CD4-positive, alpha-beta T cell (primary cell): ENCODE measurements at regions of chr5 and their contacts with region 1.

Region 1: DNA sequence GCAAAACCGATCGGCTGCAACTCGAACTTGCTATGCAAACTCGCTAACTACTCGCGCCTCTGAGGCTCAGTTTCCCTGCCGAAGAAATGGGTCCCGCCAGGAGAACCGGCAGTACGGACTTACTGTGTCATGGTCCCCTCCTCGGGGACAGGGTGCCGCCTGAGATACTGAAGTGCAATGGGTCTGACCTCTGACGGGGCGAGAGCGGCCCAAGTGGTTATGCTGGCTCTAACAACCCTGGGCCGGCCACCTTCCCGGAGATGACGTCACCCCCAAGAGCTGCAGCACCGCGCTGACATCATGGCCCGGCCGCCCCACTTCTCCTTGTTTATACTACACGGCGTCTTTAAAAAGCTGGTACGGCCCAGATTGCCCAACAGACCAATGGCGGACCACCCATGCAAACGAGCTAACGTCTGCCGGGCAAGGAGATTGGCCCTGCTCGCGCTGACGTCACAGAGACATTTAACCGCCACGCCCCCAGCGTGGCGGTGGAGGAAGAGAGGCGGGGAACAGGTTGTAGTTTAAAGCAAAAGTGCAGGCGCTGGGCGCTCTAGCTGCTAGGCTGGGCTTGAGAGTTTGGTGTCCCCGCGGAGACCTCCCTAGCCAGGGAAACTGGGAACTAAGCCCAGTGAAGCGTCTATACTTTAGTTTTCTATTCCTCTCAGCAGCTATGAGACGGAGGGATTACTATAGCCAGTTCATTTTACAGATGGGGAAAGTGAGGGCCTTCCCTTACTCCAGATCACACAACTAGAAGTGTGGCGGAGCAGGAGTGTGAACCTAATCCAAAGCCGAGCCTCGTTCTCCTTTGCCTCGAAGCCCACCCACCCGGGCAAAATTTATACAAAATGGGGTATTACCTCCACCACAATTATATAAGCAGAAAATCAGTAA is 654 bp upstream of the RNF44 start:
- DNase-seq: peak; percentile 92 to 100 (median 96)
- ATAC-seq: peak; percentile 73
- H3K4me3 ChIP-seq: peak overlapping the region; percentile 98
- H3K4me3 Mint-ChIP-seq: peak overlapping the region; percentile 99
- H3K27ac ChIP-seq: peak overlapping the region; percentile 99
- H3K27ac Mint-ChIP-seq: peak overlapping the region; percentile 100
- H3K4me1 ChIP-seq: peaks cover 78% of the 10 kb centered on the region
- H3K4me1 Mint-ChIP-seq: peaks cover 82% of the 10 kb centered on the region
- H3K27me3 ChIP-seq: no peaks in the 10 kb centered on the region
- H3K27me3 Mint-ChIP-seq: no peaks in the 10 kb centered on the region
- CTCF ChIP-seq: no peak

Region 2: DNA sequence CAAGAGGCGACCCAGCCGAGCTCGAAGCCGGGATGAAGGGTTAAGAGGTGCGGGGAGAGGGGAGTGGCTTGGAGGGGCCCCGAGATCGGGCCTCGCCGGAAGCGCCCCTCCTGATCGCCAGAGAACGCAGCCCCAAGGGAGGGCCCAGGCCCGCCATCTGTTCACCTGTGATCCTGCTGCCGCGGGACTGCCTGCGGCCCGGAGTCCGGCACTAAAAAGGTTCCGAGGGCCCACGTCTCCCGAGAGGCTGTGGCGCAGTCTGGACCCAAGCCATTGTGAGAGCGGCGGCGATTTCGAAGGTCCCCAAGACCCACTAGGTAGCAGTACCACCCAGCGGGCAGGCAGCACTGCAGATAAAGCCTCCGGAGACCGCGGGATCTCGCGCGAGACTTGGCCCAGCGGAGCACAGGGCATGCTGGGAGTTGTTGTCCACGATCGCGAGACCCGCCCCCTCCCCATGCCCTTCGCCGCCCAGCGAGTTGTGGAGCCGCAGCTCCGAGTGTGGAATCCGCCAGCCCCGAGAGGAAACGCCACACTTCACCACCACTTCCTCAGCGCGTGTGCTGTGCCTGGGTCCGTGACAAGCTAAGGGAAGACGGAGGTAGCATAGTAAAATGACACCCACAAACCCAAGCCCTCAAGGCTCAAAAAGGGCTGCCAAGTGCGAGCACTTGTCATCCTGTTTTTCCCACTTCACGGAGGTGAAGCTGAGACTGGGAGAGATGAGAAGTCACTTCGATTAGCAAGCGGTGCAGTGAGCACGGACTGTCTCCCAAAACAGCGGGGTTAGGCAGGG is 176.2 kb before region 1 on chr5 and contains the start of gene KIAA1191:
- CTCF ChIA-PET with region 1: no interaction called
- POLR2A ChIA-PET with region 1: interaction called, 28 read pairs
- intact Hi-C with region 1: no loop called
- DNase-seq: peak; percentile 89 to 98 (median 94)
- ATAC-seq: peak; percentile 92
- H3K4me3 ChIP-seq: peak within 1 kb of the TSS; percentile 98
- H3K4me3 Mint-ChIP-seq: peak within 1 kb of the TSS; percentile 96
- H3K27ac ChIP-seq: peak within 1 kb of the TSS; percentile 69 to 79
- H3K27ac Mint-ChIP-seq: peak within 1 kb of the TSS; percentile 87
- H3K4me1 ChIP-seq: peaks cover 41% of the 10 kb centered on the region
- H3K4me1 Mint-ChIP-seq: peaks cover 48% of the 10 kb centered on the region
- H3K27me3 ChIP-seq: no peaks in the 10 kb centered on the region
- H3K27me3 Mint-ChIP-seq: no peaks in the 10 kb centered on the region
- CTCF ChIP-seq: no peak
- total RNA-seq, gene KIAA1191: 64.8 TPM

Region 3: GRCh38 chr5:176415952-176416924 is 121.6 kb before region 1 on chr5 and contains the start of gene CLTB:
- CTCF ChIA-PET with region 1: interaction called, 37 read pairs
- POLR2A ChIA-PET with region 1: interaction called, 40 read pairs
- intact Hi-C with region 1: loop called (anchors 2 to 5 kb)
- DNase-seq: peak; percentile 79 to 98 (median 92)
- ATAC-seq: peak; percentile 90
- H3K4me3 ChIP-seq: peak within 1 kb of the TSS; percentile 65
- H3K4me3 Mint-ChIP-seq: peak within 1 kb of the TSS; percentile 89
- H3K27ac ChIP-seq: peak within 1 kb of the TSS; percentile 18 to 61
- H3K27ac Mint-ChIP-seq: peak within 1 kb of the TSS; percentile 86
- H3K4me1 ChIP-seq: peaks cover 37% of the 10 kb centered on the region
- H3K4me1 Mint-ChIP-seq: peaks cover 42% of the 10 kb centered on the region
- H3K27me3 ChIP-seq: no peaks in the 10 kb centered on the region
- H3K27me3 Mint-ChIP-seq: no peaks in the 10 kb centered on the region
- CTCF ChIP-seq: peak; percentile 41
- total RNA-seq, gene CLTB: 69.5 to 73.2 TPM

Region 4: GRCh38 chr5:176490301-176490700 is 47.6 kb before region 1 on chr5:
- CTCF ChIA-PET with region 1: no interaction called
- POLR2A ChIA-PET with region 1: interaction called, 15 read pairs
- intact Hi-C with region 1: no loop called
- DNase-seq: no peak
- ATAC-seq: no peak
- H3K4me3 ChIP-seq: no peak overlapping the region
- H3K4me3 Mint-ChIP-seq: no peak overlapping the region
- H3K27ac ChIP-seq: no peak overlapping the region
- H3K27ac Mint-ChIP-seq: no peak overlapping the region
- H3K4me1 ChIP-seq: peaks cover 25% of the 10 kb centered on the region
- H3K4me1 Mint-ChIP-seq: peaks cover 46% of the 10 kb centered on the region
- H3K27me3 ChIP-seq: no peaks in the 10 kb centered on the region
- H3K27me3 Mint-ChIP-seq: no peaks in the 10 kb centered on the region
- CTCF ChIP-seq: no peak

Region 5: GRCh38 chr5:176553262-176554077 is 15.6 kb after region 1 on chr5:
- CTCF ChIA-PET with region 1: interaction called, 3 read pairs
- POLR2A ChIA-PET with region 1: interaction called, 29 read pairs
- intact Hi-C with region 1: no loop called
- DNase-seq: peak in 1 of 14 experiments; percentile 13
- ATAC-seq: no peak
- H3K4me3 ChIP-seq: no peak overlapping the region
- H3K4me3 Mint-ChIP-seq: no peak overlapping the region
- H3K27ac ChIP-seq: no peak overlapping the region
- H3K27ac Mint-ChIP-seq: peak overlapping the region; percentile 37
- H3K4me1 ChIP-seq: peaks cover 65% of the 10 kb centered on the region
- H3K4me1 Mint-ChIP-seq: peaks cover 46% of the 10 kb centered on the region
- H3K27me3 ChIP-seq: no peaks in the 10 kb centered on the region
- H3K27me3 Mint-ChIP-seq: no peaks in the 10 kb centered on the region
- CTCF ChIP-seq: no peak

Region 6: DNA sequence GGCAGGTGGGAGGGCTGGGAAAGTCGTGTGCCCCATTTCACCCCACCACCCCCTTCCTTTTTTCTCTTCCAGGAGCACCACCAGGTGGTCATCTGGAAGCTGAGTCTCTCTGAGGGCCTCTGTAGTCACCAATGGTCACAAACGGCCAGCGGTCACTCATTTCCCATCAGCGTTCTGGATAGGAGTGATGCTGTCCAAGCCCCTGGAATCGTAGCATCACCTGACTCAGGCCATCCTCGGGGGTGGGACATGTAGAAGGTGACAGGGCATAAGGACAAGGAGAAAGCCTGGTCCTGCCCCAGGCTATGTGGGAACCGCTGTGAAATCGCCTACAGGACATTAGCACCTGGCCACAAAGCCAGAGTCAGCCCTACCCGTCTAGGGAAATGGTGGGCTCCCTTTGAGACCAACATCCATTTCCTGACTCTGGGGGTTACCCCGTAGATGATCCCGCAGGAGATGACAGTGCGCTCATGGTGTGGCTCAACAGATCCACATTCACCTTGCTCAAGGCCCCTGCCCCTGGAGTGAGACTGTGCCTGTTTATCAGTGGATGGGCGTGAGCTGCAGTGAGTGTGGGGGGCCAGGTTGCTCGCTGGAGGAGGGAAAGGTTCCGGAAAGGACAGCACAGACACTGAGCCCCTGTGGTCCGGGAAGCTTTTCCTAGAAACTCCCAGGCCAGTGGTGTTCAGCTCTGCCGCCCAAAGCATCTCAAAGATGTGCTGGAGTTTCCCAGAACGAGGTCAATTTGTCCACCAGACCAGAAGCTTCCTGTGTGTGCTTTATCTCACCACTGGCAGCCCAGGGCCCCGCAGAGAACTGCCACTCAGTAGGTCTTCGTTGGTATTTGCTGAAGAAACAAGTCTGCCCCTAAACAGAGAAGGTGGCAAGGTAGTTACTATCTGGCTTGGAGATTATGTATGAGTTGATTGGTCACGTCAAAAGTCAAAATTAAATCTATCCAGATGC is 211.4 kb after region 1 on chr5:
- CTCF ChIA-PET with region 1: no interaction called
- POLR2A ChIA-PET with region 1: no interaction called
- intact Hi-C with region 1: no loop called
- DNase-seq: peak in 1 of 14 experiments; percentile 2
- ATAC-seq: no peak
- H3K4me3 ChIP-seq: no peak overlapping the region
- H3K4me3 Mint-ChIP-seq: no peak overlapping the region
- H3K27ac ChIP-seq: no peak overlapping the region
- H3K27ac Mint-ChIP-seq: no peak overlapping the region
- H3K4me1 ChIP-seq: peaks cover 19% of the 10 kb centered on the region
- H3K4me1 Mint-ChIP-seq: peaks cover 21% of the 10 kb centered on the region
- H3K27me3 ChIP-seq: peaks cover 56 to 60% of the 10 kb centered on the region in 2 experiments
- H3K27me3 Mint-ChIP-seq: peaks cover 77% of the 10 kb centered on the region
- CTCF ChIP-seq: no peak

Region 7: DNA sequence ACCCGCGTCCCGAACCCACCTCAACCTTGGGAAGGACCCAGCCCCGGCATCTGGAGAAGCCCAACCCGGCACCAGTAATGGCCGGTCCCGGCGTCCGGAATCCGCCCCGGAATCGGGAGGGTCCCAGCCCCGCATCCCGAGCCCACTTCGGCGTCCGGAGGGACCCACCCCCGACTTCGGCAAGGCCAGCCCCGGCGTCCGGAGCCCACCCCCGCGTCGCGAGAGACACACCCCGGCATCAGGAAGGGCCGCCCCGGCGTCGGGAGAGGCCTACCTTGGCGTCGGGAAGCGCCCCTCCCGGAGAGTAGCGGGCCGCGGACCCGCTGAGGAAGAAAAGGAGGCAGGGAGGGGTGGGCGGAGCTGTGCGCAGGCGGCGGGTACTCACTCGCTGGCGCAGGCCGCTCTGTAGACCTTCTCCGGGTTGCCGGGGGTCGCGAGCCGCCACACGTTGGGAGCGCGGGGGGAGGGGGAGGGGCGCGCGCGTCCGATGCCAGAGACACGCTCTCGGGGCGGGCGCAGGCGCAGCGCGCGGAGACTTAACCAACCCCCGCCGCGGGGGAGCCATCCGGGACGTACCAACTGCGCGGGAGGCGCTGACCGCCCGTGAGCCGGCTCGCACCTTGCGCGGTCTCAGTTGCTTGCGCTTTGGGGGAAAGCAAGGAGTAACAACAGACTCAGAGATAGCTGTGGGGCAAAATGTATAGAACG is 468.6 kb after region 1 on chr5 and contains the start of gene UIMC1:
- CTCF ChIA-PET with region 1: no interaction called
- POLR2A ChIA-PET with region 1: interaction called, 3 read pairs
- intact Hi-C with region 1: loop called in 1 of 2 experiments (anchors 5 kb)
- DNase-seq: peak; percentile 84 to 96 (median 89)
- ATAC-seq: peak; percentile 83
- H3K4me3 ChIP-seq: peak within 1 kb of the TSS; percentile 91
- H3K4me3 Mint-ChIP-seq: peak within 1 kb of the TSS; percentile 99
- H3K27ac ChIP-seq: peak within 1 kb of the TSS; percentile 70 to 72
- H3K27ac Mint-ChIP-seq: peak within 1 kb of the TSS; percentile 95
- H3K4me1 ChIP-seq: peaks cover 32% of the 10 kb centered on the region
- H3K4me1 Mint-ChIP-seq: peaks cover 35% of the 10 kb centered on the region
- H3K27me3 ChIP-seq: no peaks in the 10 kb centered on the region
- H3K27me3 Mint-ChIP-seq: no peaks in the 10 kb centered on the region
- CTCF ChIP-seq: no peak
- total RNA-seq, gene UIMC1: 42.3 to 50.8 TPM

Region 8: DNA sequence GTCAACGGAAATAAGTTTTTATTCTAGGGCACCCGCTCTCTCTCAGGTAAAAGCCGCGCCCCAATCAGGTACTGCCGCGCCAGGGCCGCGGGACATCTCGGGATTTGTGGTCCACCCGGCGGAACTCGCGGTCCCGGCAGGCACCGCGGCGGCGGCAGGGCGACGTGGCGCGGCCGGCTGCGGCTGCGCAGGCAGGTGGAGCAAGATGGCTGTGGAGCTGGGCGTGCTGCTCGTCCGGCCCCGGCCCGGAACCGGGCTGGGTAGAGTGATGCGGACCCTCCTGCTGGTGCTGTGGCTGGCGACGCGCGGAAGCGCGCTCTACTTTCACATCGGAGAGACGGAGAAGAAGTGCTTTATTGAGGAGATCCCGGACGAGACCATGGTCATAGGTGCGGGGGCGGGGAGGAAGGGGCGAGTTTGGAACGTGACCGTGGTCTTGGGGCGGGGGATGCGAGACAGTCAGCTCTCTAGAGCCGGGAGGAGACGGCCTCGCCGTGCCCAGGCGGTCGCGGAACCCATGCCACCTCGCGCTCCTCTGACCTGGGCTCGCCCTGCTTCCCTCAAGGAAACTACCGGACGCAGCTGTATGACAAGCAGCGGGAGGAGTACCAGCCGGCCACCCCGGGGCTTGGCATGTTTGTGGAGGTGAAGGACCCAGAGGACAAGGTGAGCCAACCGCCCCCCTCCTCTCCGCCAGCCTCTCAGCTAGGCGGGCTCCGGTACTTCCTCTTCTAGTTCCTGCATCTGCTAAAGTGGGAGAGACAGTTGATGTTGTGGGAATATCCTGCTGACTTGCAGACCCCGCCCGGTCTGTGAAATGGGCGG is 1054.4 kb after region 1 on chr5 and contains the start of gene TMED9:
- CTCF ChIA-PET with region 1: no interaction called
- POLR2A ChIA-PET with region 1: no interaction called
- intact Hi-C with region 1: loop called in 1 of 2 experiments (anchors 5 kb)
- DNase-seq: peak; percentile 77 to 94 (median 86)
- ATAC-seq: peak; percentile 99
- H3K4me3 ChIP-seq: peak within 1 kb of the TSS; percentile 71
- H3K4me3 Mint-ChIP-seq: peak within 1 kb of the TSS; percentile 100
- H3K27ac ChIP-seq: peak within 1 kb of the TSS; percentile 64 to 69
- H3K27ac Mint-ChIP-seq: peak within 1 kb of the TSS; percentile 87
- H3K4me1 ChIP-seq: peaks cover 32% of the 10 kb centered on the region
- H3K4me1 Mint-ChIP-seq: peaks cover 31% of the 10 kb centered on the region
- H3K27me3 ChIP-seq: no peaks in the 10 kb centered on the region
- H3K27me3 Mint-ChIP-seq: peaks cover 24% of the 10 kb centered on the region
- CTCF ChIP-seq: no peak
- total RNA-seq, gene TMED9: 42.7 to 47.8 TPM